ENCODE measurements at regions of chr11 and their contacts with region 1.

Region 1: GRCh38 chr11:45655347-45655756 is 10.1 kb downstream of the CHST1 start:
- DNase-seq: peak; percentile 61 to 88
- ATAC-seq: peak; percentile 83 to 93
- H3K4me3 ChIP-seq: no peak overlapping the region
- H3K27ac ChIP-seq: no peak overlapping the region
- H3K4me1 ChIP-seq: no peaks in the 10 kb centered on the region
- CTCF ChIP-seq: peak; percentile 75
- EP300 ChIP-seq: no peak
- POLR2A ChIP-seq: no peak
- RAD21 ChIP-seq: peak; percentile 64 to 67

Region 2: DNA sequence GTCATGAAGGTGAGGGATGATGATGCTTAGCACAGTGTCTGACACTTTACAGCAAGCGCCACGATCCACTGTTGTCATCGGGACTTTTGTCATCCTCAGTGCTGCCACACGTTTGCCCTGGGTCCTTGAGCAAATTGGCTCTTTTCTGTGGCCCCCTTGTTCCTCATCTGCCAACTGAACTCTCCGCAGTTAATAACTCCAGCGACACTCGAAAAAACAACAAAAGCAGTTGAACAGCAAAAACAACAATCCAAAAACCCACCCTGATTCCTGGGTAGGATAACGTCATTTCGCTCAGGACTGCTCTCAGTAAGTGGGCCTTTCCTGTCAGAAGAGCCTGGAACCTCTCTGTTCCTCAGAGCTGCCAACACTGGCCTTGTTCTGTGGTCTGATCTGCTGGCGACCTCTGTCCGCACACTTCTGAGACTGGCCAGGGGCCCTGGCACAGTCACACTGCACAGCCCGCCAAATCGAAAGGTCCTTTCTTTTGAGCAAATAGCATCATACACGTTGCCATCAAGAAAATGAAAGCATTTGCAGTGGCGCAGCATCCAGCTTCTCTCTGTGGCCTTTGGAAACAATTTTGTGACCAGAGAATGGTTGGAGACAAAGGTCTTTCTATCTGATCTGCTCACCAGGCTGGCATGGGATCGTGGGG is 289.3 kb before region 1 on chr11:
- CTCF ChIA-PET with region 1: interaction called, 149 read pairs
- POLR2A ChIA-PET with region 1: no interaction called
- DNase-seq: no peak
- ATAC-seq: no peak
- H3K4me3 ChIP-seq: no peak overlapping the region
- H3K27ac ChIP-seq: no peak overlapping the region
- H3K4me1 ChIP-seq: no peaks in the 10 kb centered on the region
- CTCF ChIP-seq: no peak
- EP300 ChIP-seq: no peak
- POLR2A ChIP-seq: no peak
- RAD21 ChIP-seq: no peak

Region 3: GRCh38 chr11:45405916-45406670 is 249.3 kb before region 1 on chr11:
- CTCF ChIA-PET with region 1: interaction called, 14 read pairs
- POLR2A ChIA-PET with region 1: no interaction called
- DNase-seq: peak in 1 of 2 experiments; percentile 13
- ATAC-seq: 0 out of 6 replicates have a peak, but pooled peaks of 1 of the 2 experiments have one; percentile 46
- H3K4me3 ChIP-seq: no peak overlapping the region
- H3K27ac ChIP-seq: no peak overlapping the region
- H3K4me1 ChIP-seq: no peaks in the 10 kb centered on the region; the same call in 2 of the 3 replicates
- CTCF ChIP-seq: peak; percentile 43; the same call in 2 of the 3 replicates
- EP300 ChIP-seq: no peak
- POLR2A ChIP-seq: no peak
- RAD21 ChIP-seq: peak; percentile 41 to 47; a peak in 4 of 5 replicates

Region 4: GRCh38 chr11:45665206-45665932 is 10.0 kb after region 1 on chr11 and contains the start of gene CHST1:
- CTCF ChIA-PET with region 1: interaction called, 26 read pairs
- POLR2A ChIA-PET with region 1: no interaction called
- DNase-seq: peak in 1 of 2 experiments; percentile 21
- ATAC-seq: peak; percentile 33 to 45
- H3K4me3 ChIP-seq: peak within 1 kb of the TSS; percentile 67
- H3K27ac ChIP-seq: peak within 1 kb of the TSS; percentile 39 to 83; a peak in 5 of 6 replicates
- H3K4me1 ChIP-seq: peaks cover 28% of the 10 kb centered on the region
- CTCF ChIP-seq: no peak
- EP300 ChIP-seq: no peak
- POLR2A ChIP-seq: no peak
- RAD21 ChIP-seq: no peak
- polyA plus RNA-seq, gene CHST1: 0.22 and 0.40 TPM in 2 replicates

Region 5: GRCh38 chr11:45698777-45699497 is 43.6 kb after region 1 on chr11:
- CTCF ChIA-PET with region 1: interaction called, 13 read pairs
- POLR2A ChIA-PET with region 1: no interaction called
- DNase-seq: no peak
- ATAC-seq: no peak
- H3K4me3 ChIP-seq: no peak overlapping the region
- H3K27ac ChIP-seq: no peak overlapping the region
- H3K4me1 ChIP-seq: no peaks in the 10 kb centered on the region
- CTCF ChIP-seq: no peak
- EP300 ChIP-seq: no peak
- POLR2A ChIP-seq: no peak
- RAD21 ChIP-seq: no peak

Measured in A549 (cell line).